MCF 10A (cell line): ENCODE measurements at regions of chr3 and their contacts with region 1.

Region 1: DNA sequence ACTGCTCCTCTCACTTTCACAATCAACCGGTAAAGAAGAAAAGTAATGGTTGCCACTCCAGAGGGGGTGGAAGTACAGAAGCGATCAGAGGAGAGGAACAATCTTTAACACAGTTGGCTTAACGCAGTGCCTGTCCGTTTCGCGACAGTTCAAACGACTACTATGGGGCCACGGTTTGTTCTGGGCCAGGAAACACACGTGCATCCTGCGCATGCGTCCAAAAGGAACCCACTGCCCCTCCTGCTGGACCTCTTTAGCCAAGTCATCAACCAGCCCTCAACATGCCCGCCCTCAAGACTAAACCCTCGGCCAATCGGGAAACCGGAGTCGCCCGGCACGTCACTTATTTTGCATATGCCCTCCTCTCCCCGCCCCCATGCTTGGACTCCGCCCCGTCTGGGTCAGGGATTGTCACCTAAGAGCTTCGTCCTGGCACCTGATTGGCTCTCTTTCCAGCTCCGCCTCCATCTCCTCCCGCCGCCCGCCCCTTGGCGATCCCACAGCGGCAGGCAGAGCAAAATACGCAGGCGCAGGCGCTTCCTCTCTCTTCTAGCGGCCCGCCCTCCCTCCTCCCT is 345 bp upstream of the CDV3 start:
- DNase-seq: peak; percentile 100
- H3K4me3 Mint-ChIP-seq: peak overlapping the region; percentile 91
- H3K27ac Mint-ChIP-seq: peak overlapping the region; percentile 91
- H3K4me1 Mint-ChIP-seq: peaks cover 33% of the 10 kb centered on the region
- H3K27me3 Mint-ChIP-seq: no peaks in the 10 kb centered on the region
- CTCF ChIP-seq: no peak

Region 2: DNA sequence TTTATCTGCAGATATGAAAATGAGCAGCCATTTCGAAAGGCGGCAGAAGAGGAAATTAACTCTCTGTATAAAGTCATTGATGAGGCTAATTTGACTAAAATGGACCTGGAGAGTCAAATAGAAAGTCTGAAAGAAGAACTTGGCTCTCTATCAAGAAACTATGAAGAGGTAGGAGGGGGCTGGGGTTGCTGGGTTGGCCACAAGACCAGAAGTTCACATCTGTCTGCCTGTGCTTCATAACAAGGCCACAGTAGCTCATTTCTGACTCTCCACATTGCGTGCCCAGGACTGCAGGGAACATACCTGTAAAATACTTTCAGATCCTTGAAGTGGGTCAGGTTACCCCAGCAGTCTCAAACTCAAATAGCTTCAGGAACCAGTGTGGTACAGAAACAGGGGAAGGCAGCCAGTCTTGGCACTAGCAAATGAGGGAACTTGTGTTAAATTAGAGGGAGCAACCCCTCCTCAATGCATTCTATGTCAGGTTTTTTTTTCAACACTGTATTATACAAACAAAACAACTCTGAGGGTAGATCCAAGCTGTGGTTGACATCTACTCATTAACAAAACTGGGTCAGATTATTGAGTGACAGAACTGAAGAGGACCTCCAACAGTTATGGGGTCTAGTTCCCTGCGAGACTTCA is 124.5 kb before region 1 on chr3:
- CTCF ChIA-PET with region 1: interaction called, 36 read pairs
- POLR2A ChIA-PET with region 1: interaction called, 5 read pairs
- intact Hi-C with region 1: loop called (anchors 1 kb)
- DNase-seq: no peak
- H3K4me3 Mint-ChIP-seq: no peak overlapping the region
- H3K27ac Mint-ChIP-seq: no peak overlapping the region
- H3K4me1 Mint-ChIP-seq: peaks cover 12% of the 10 kb centered on the region
- H3K27me3 Mint-ChIP-seq: peaks cover 12% of the 10 kb centered on the region
- CTCF ChIP-seq: no peak

Region 3: DNA sequence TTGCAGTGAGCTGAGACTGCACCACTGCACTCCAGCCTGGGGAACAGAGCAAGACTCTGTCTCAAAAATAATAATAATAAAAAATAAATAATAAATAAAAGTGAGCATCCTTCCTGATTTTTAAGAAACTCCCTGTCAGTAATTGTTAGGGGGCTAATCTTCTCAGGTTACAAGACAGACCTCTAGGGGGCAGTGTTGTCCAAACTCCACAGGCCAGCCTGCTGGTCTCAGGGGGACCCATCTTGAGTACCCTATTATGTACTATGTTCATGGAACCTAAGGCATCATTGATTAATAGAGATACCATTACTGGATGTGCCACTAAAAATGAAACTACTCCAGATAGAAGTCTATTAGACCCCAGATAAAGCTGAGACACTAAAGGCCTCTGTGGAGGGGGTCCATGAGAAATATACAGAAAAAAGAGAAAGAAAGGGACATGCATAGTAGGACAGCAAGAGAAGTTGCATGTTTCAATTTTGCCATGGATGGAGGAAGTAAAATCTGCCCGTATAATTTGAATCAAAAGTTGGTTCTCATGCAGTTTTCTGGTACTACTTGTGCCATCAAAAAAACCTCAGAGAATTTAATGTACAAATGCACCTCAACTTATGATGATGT is 85.1 kb before region 1 on chr3:
- CTCF ChIA-PET with region 1: interaction called, 86 read pairs
- POLR2A ChIA-PET with region 1: interaction called, 25 read pairs
- intact Hi-C with region 1: loop called (anchors 1 kb)
- DNase-seq: peak; percentile 58
- H3K4me3 Mint-ChIP-seq: no peak overlapping the region
- H3K27ac Mint-ChIP-seq: no peak overlapping the region
- H3K4me1 Mint-ChIP-seq: peaks cover 19% of the 10 kb centered on the region
- H3K27me3 Mint-ChIP-seq: no peaks in the 10 kb centered on the region
- CTCF ChIP-seq: peak; percentile 66

Region 4: GRCh38 chr3:133535971-133536634 is 37.0 kb before region 1 on chr3:
- CTCF ChIA-PET with region 1: interaction called, 10 read pairs
- POLR2A ChIA-PET with region 1: interaction called, 60 read pairs
- intact Hi-C with region 1: loop called (anchors 2 kb)
- DNase-seq: peak; percentile 93
- H3K4me3 Mint-ChIP-seq: peak overlapping the region; percentile 2
- H3K27ac Mint-ChIP-seq: peak overlapping the region; percentile 70
- H3K4me1 Mint-ChIP-seq: peaks cover 21% of the 10 kb centered on the region
- H3K27me3 Mint-ChIP-seq: no peaks in the 10 kb centered on the region
- CTCF ChIP-seq: no peak

Region 5: GRCh38 chr3:133547432-133548041 is 25.6 kb before region 1 on chr3:
- CTCF ChIA-PET with region 1: interaction called, 11 read pairs
- POLR2A ChIA-PET with region 1: interaction called, 15 read pairs
- intact Hi-C with region 1: no loop called
- DNase-seq: peak; percentile 47
- H3K4me3 Mint-ChIP-seq: no peak overlapping the region
- H3K27ac Mint-ChIP-seq: no peak overlapping the region
- H3K4me1 Mint-ChIP-seq: peaks cover 18% of the 10 kb centered on the region
- H3K27me3 Mint-ChIP-seq: no peaks in the 10 kb centered on the region
- CTCF ChIP-seq: no peak

Region 6: GRCh38 chr3:133805527-133806475 is 232.7 kb after region 1 on chr3 and contains the start of gene SRPRB:
- CTCF ChIA-PET with region 1: no interaction called
- POLR2A ChIA-PET with region 1: no interaction called
- intact Hi-C with region 1: loop called (anchors 10 kb)
- DNase-seq: peak; percentile 96
- H3K4me3 Mint-ChIP-seq: peak within 1 kb of the TSS; percentile 85
- H3K27ac Mint-ChIP-seq: peak within 1 kb of the TSS; percentile 30
- H3K4me1 Mint-ChIP-seq: peaks cover 8% of the 10 kb centered on the region
- H3K27me3 Mint-ChIP-seq: no peaks in the 10 kb centered on the region
- CTCF ChIP-seq: no peak
- total RNA-seq, gene SRPRB: 180 and 212 TPM in 2 replicates